CD4-positive, alpha-beta T cell (primary cell): ENCODE measurements at regions of chr4 and their contacts with region 1.

Region 1: GRCh38 chr4:48315728-48316630 is 25.4 kb upstream of the SLAIN2 start:
- DNase-seq: peak in 5 of 14 experiments; percentile 5 to 68 (median 43)
- ATAC-seq: peak; percentile 61
- H3K4me3 ChIP-seq: no peak overlapping the region
- H3K4me3 Mint-ChIP-seq: no peak overlapping the region
- H3K27ac ChIP-seq: no peak overlapping the region
- H3K27ac Mint-ChIP-seq: no peak overlapping the region
- H3K4me1 ChIP-seq: no peaks in the 10 kb centered on the region
- H3K4me1 Mint-ChIP-seq: no peaks in the 10 kb centered on the region
- H3K27me3 ChIP-seq: no peaks in the 10 kb centered on the region
- H3K27me3 Mint-ChIP-seq: no peaks in the 10 kb centered on the region
- CTCF ChIP-seq: peak; percentile 71

Region 2: DNA sequence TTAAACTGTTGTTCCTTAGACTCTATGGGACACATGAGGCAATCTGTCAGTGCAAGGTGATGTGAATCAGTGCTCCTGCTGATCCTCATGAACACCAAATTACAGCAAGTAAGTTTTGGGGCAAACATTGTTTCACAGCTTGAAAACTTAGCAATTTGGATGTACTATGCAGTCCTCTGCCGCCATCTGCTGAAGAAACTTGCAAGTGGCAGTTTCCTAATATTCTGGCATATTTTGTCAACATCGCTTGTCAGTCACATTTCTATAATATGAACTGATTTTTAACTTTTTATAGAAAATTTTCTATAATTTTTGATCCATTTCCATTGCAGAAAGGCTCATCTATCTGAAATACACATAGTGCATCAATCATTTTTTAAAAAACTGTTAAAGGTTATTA is 230.4 kb after region 1 on chr4:
- CTCF ChIA-PET with region 1: no interaction called
- POLR2A ChIA-PET with region 1: no interaction called
- intact Hi-C with region 1: loop called (anchors 10 kb)
- DNase-seq: peak in 8 of 14 experiments; percentile 2 to 42 (median 10)
- ATAC-seq: no peak
- H3K4me3 ChIP-seq: no peak overlapping the region
- H3K4me3 Mint-ChIP-seq: no peak overlapping the region
- H3K27ac ChIP-seq: no peak overlapping the region
- H3K27ac Mint-ChIP-seq: peak overlapping the region; percentile 12
- H3K4me1 ChIP-seq: no peaks in the 10 kb centered on the region
- H3K4me1 Mint-ChIP-seq: no peaks in the 10 kb centered on the region
- H3K27me3 ChIP-seq: no peaks in the 10 kb centered on the region
- H3K27me3 Mint-ChIP-seq: no peaks in the 10 kb centered on the region
- CTCF ChIP-seq: peak; percentile 15